ENCODE measurements at regions of chr9 and their contacts with region 1.

Region 1: GRCh38 chr9:70085241-70085640 is 41.6 kb downstream of the MAMDC2 start:
- DNase-seq: peak; percentile 66
- ATAC-seq: peak; percentile 59; the same call in 1 of the 2 replicates
- H3K4me3 ChIP-seq: no peak overlapping the region
- H3K27ac ChIP-seq: no peak overlapping the region
- H3K4me1 ChIP-seq: no peaks in the 10 kb centered on the region
- H3K27me3 ChIP-seq: no peaks in the 10 kb centered on the region
- CTCF ChIP-seq: no peak
- POLR2A ChIP-seq: no peak
- RAD21 ChIP-seq: no peak

Region 2: DNA sequence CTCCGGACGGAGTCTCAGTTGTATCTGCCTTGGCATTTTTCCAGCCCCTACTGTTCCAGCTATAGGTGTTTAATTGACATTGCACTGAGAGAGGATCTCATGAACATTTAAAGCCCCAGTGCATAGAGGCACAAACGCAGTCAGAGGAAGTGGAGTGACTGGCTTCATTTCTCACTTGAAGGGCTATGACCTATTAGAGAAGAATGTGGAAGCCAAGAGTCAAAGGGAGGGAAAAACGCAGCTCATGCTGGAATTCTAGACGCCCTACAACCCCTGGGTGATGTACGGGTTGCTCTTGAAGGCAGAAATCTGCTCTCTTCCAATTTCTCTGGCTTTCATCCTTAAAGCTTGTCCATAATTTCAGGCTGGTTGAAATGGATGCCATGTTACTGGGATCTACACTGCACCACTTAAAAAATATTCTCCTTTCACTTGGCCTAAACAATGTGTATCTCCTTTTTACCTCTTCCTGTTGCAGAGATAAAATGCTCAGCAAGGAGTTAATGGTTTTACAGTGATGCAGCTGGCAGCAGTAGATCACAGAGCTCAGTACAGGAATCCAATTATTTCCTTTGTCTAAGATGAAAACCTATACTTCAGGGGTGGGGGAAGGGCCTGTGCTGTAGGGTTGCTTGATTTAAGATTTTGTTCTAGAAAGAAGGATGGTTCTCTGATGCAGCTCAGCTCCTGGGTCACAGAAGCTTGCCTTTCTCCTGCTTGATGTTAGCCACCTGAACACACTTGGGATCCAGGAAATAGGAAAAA is 103.4 kb before region 1 on chr9:
- CTCF ChIA-PET with region 1: interaction called, 5 read pairs
- POLR2A ChIA-PET with region 1: no interaction called
- dilution Hi-C with region 1: no loop called
- in situ Hi-C with region 1: no loop called
- intact Hi-C with region 1: loop called (anchors 5 kb)
- DNase-seq: peak; percentile 77
- ATAC-seq: peak; percentile 92
- H3K4me3 ChIP-seq: no peak overlapping the region
- H3K27ac ChIP-seq: peak overlapping the region; percentile 10; the same call in 1 of the 2 replicates
- H3K4me1 ChIP-seq: peaks cover 7% of the 10 kb centered on the region; the same call in 1 of the 2 replicates
- H3K27me3 ChIP-seq: no peaks in the 10 kb centered on the region
- CTCF ChIP-seq: no peak
- POLR2A ChIP-seq: no peak
- RAD21 ChIP-seq: no peak

Region 3: GRCh38 chr9:70130272-70130671 is 45.0 kb after region 1 on chr9:
- CTCF ChIA-PET with region 1: no interaction called
- POLR2A ChIA-PET with region 1: no interaction called
- dilution Hi-C with region 1: no loop called
- in situ Hi-C with region 1: no loop called
- intact Hi-C with region 1: no loop called
- DNase-seq: no peak
- ATAC-seq: no peak
- H3K4me3 ChIP-seq: no peak overlapping the region
- H3K27ac ChIP-seq: no peak overlapping the region
- H3K4me1 ChIP-seq: 0 out of 2 replicates have a peak, but pooled peaks cover 2% of the 10 kb centered on the region
- H3K27me3 ChIP-seq: no peaks in the 10 kb centered on the region
- CTCF ChIP-seq: no peak
- POLR2A ChIP-seq: no peak
- RAD21 ChIP-seq: no peak